GM12878 (cell line): ENCODE measurements at regions of chr20 and their contacts with region 1.

Region 1: DNA sequence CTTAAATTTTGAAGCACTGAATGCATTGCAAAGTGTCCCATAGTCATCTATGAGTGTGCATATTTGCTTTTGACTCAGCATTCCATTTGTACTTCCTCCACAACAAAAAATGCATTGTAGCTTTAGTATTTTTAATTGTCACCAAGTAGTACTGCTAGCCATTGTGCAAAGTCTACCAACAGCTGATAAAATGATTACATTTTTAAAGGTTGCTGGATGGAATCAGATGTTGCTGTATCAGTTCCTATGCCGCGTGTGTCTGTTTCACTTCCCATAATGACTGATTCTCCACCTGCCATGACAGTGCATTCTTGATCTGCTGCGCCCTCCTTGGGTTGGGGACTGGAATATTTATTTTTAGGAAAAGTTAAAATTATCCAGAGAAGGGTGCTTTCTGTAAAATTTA is 41.2 kb downstream of the SLX4IP start:
- DNase-seq: peak; percentile 60
- ATAC-seq: peak; percentile 86
- H3K4me3 ChIP-seq: no peak overlapping the region
- H3K27ac ChIP-seq: peak overlapping the region; percentile 49; the same call in 1 of the 2 replicates
- H3K4me1 ChIP-seq: peaks cover 37% of the 10 kb centered on the region
- H3K27me3 ChIP-seq: no peaks in the 10 kb centered on the region
- CTCF ChIP-seq: peak; percentile 31 to 74 (median 45); a peak in 4 of 6 replicates
- EP300 ChIP-seq: peak; percentile 74 to 90; a peak in 3 of 4 replicates
- POLR2A ChIP-seq: no peak
- RAD21 ChIP-seq: peak; percentile 84

Region 2: GRCh38 chr20:10347086-10347880 is 129.0 kb before region 1 on chr20:
- CTCF ChIA-PET with region 1: interaction called, 6 read pairs
- POLR2A ChIA-PET with region 1: interaction called, 4 read pairs
- RAD21 ChIA-PET with region 1: interaction called, 15 read pairs
- SMC1A ChIA-PET with region 1: interaction called, 31 read pairs
- in situ Hi-C with region 1: no loop called
- intact Hi-C with region 1: loop called (anchors 5 kb)
- DNase-seq: no peak
- ATAC-seq: no peak
- H3K4me3 ChIP-seq: no peak overlapping the region
- H3K27ac ChIP-seq: no peak overlapping the region
- H3K4me1 ChIP-seq: peaks cover 12% of the 10 kb centered on the region
- H3K27me3 ChIP-seq: no peaks in the 10 kb centered on the region
- CTCF ChIP-seq: no peak
- EP300 ChIP-seq: no peak
- POLR2A ChIP-seq: no peak
- RAD21 ChIP-seq: no peak

Region 3: GRCh38 chr20:10412591-10413408 is 63.5 kb before region 1 on chr20:
- CTCF ChIA-PET with region 1: interaction called, 7 read pairs
- POLR2A ChIA-PET with region 1: interaction called, 6 read pairs
- RAD21 ChIA-PET with region 1: interaction called, 7 read pairs
- SMC1A ChIA-PET with region 1: interaction called, 17 read pairs
- in situ Hi-C with region 1: no loop called
- intact Hi-C with region 1: no loop called
- DNase-seq: no peak
- ATAC-seq: peak; percentile 85
- H3K4me3 ChIP-seq: no peak overlapping the region
- H3K27ac ChIP-seq: no peak overlapping the region
- H3K4me1 ChIP-seq: peaks cover 8% of the 10 kb centered on the region
- H3K27me3 ChIP-seq: no peaks in the 10 kb centered on the region
- CTCF ChIP-seq: peak; percentile 19 to 32 (median 20); a peak in 1 of 6 replicates
- EP300 ChIP-seq: peak; percentile 26 to 53; a peak in 2 of 4 replicates
- POLR2A ChIP-seq: no peak
- RAD21 ChIP-seq: no peak

Region 4: DNA sequence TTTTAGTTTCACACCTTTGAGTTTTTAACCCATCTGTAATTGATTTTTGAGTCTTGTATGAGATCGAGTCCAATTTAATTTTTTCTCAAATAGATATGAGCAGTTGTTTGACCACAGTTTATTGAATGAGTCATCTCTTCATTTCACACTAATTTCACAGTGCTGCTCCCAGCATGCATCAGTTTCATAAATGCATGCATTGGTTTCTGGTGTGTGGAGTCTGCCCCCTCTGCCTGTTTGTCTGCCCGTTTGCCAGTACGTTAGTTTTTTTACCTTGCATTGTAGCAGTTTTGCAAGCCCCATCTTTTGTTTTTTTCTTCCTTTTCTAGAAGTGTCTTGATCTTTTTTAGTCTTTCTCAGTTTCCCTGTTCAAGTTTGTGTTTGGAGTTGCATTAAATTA is 29.3 kb before region 1 on chr20:
- CTCF ChIA-PET with region 1: interaction called, 6 read pairs
- POLR2A ChIA-PET with region 1: interaction called, 5 read pairs
- RAD21 ChIA-PET with region 1: interaction called, 19 read pairs
- SMC1A ChIA-PET with region 1: interaction called, 26 read pairs
- in situ Hi-C with region 1: no loop called
- intact Hi-C with region 1: no loop called
- DNase-seq: peak; percentile 92
- ATAC-seq: peak; percentile 96
- H3K4me3 ChIP-seq: peak overlapping the region; percentile 46; the same call in 1 of the 2 replicates
- H3K27ac ChIP-seq: peak overlapping the region; percentile 57; the same call in 1 of the 2 replicates
- H3K4me1 ChIP-seq: peaks cover 18% of the 10 kb centered on the region
- H3K27me3 ChIP-seq: no peaks in the 10 kb centered on the region
- CTCF ChIP-seq: peak in 1 of 3 experiments; percentile 26; a peak in 1 of 6 replicates
- EP300 ChIP-seq: peak; percentile 75 to 91
- POLR2A ChIP-seq: no peak
- RAD21 ChIP-seq: peak; percentile 17; the same call in 1 of the 2 replicates

Region 5: GRCh38 chr20:10511509-10512251 is 35.4 kb after region 1 on chr20:
- CTCF ChIA-PET with region 1: interaction called, 46 read pairs
- POLR2A ChIA-PET with region 1: interaction called, 11 read pairs
- RAD21 ChIA-PET with region 1: interaction called, 77 read pairs
- SMC1A ChIA-PET with region 1: interaction called, 76 read pairs
- in situ Hi-C with region 1: no loop called
- intact Hi-C with region 1: loop called (anchors 2 kb)
- DNase-seq: peak; percentile 94
- ATAC-seq: peak; percentile 98
- H3K4me3 ChIP-seq: no peak overlapping the region; the same call in 1 of the 2 replicates
- H3K27ac ChIP-seq: peak overlapping the region; percentile 87
- H3K4me1 ChIP-seq: peaks cover 32% of the 10 kb centered on the region
- H3K27me3 ChIP-seq: no peaks in the 10 kb centered on the region
- CTCF ChIP-seq: 0 out of 6 replicates have a peak, but pooled peaks of 1 of the 3 experiments have one; percentile 2
- EP300 ChIP-seq: peak; percentile 55 to 78; a peak in 3 of 4 replicates
- POLR2A ChIP-seq: peak; percentile 57
- RAD21 ChIP-seq: 0 out of 2 replicates have a peak, but pooled peaks have one; percentile 5

Region 6: GRCh38 chr20:10558635-10559187 is 82.4 kb after region 1 on chr20:
- CTCF ChIA-PET with region 1: no interaction called
- POLR2A ChIA-PET with region 1: no interaction called
- RAD21 ChIA-PET with region 1: interaction called, 22 read pairs
- SMC1A ChIA-PET with region 1: interaction called, 19 read pairs
- in situ Hi-C with region 1: no loop called
- intact Hi-C with region 1: no loop called
- DNase-seq: peak; percentile 84
- ATAC-seq: peak; percentile 98
- H3K4me3 ChIP-seq: no peak overlapping the region
- H3K27ac ChIP-seq: peak overlapping the region; percentile 59
- H3K4me1 ChIP-seq: peaks cover 11% of the 10 kb centered on the region; the same call in 1 of the 2 replicates
- H3K27me3 ChIP-seq: no peaks in the 10 kb centered on the region
- CTCF ChIP-seq: no peak
- EP300 ChIP-seq: peak; percentile 95 to 96; a peak in 3 of 4 replicates
- POLR2A ChIP-seq: no peak
- RAD21 ChIP-seq: no peak

Region 7: GRCh38 chr20:10578607-10579006 is 102.3 kb after region 1 on chr20:
- CTCF ChIA-PET with region 1: no interaction called
- POLR2A ChIA-PET with region 1: no interaction called
- RAD21 ChIA-PET with region 1: no interaction called
- SMC1A ChIA-PET with region 1: no interaction called
- in situ Hi-C with region 1: no loop called
- intact Hi-C with region 1: no loop called
- DNase-seq: no peak
- ATAC-seq: peak; percentile 69
- H3K4me3 ChIP-seq: no peak overlapping the region
- H3K27ac ChIP-seq: no peak overlapping the region
- H3K4me1 ChIP-seq: no peaks in the 10 kb centered on the region
- H3K27me3 ChIP-seq: no peaks in the 10 kb centered on the region
- CTCF ChIP-seq: no peak
- EP300 ChIP-seq: no peak
- POLR2A ChIP-seq: no peak
- RAD21 ChIP-seq: no peak

Region 8: GRCh38 chr20:10596726-10597125 is 120.4 kb after region 1 on chr20:
- CTCF ChIA-PET with region 1: no interaction called
- POLR2A ChIA-PET with region 1: no interaction called
- RAD21 ChIA-PET with region 1: no interaction called
- SMC1A ChIA-PET with region 1: no interaction called
- in situ Hi-C with region 1: no loop called
- intact Hi-C with region 1: no loop called
- DNase-seq: no peak
- ATAC-seq: no peak
- H3K4me3 ChIP-seq: no peak overlapping the region
- H3K27ac ChIP-seq: no peak overlapping the region
- H3K4me1 ChIP-seq: peaks cover 7% of the 10 kb centered on the region; the same call in 1 of the 2 replicates
- H3K27me3 ChIP-seq: no peaks in the 10 kb centered on the region
- CTCF ChIP-seq: no peak
- EP300 ChIP-seq: no peak
- POLR2A ChIP-seq: no peak
- RAD21 ChIP-seq: no peak

Region 9: GRCh38 chr20:11544029-11544678 is 1067.8 kb after region 1 on chr20:
- CTCF ChIA-PET with region 1: interaction called, 14 read pairs
- POLR2A ChIA-PET with region 1: no interaction called
- RAD21 ChIA-PET with region 1: interaction called, 3 read pairs
- SMC1A ChIA-PET with region 1: interaction called, 4 read pairs
- in situ Hi-C with region 1: no loop called
- intact Hi-C with region 1: loop called (anchors 5 kb)
- DNase-seq: peak; percentile 40
- ATAC-seq: peak; percentile 97
- H3K4me3 ChIP-seq: no peak overlapping the region
- H3K27ac ChIP-seq: no peak overlapping the region
- H3K4me1 ChIP-seq: no peaks in the 10 kb centered on the region
- H3K27me3 ChIP-seq: no peaks in the 10 kb centered on the region
- CTCF ChIP-seq: peak; percentile 33 to 76 (median 39); a peak in 4 of 6 replicates
- EP300 ChIP-seq: no peak
- POLR2A ChIP-seq: no peak
- RAD21 ChIP-seq: peak; percentile 86